GM13976 (cell line): ENCODE measurements at regions of chr12 and their contacts with region 1.

Region 1: GRCh38 chr12:27733052-27733656 is 22.5 kb downstream of the MRPS35 start:
- DNase-seq: peak; percentile 41
- CTCF ChIP-seq: peak; percentile 68

Region 2: DNA sequence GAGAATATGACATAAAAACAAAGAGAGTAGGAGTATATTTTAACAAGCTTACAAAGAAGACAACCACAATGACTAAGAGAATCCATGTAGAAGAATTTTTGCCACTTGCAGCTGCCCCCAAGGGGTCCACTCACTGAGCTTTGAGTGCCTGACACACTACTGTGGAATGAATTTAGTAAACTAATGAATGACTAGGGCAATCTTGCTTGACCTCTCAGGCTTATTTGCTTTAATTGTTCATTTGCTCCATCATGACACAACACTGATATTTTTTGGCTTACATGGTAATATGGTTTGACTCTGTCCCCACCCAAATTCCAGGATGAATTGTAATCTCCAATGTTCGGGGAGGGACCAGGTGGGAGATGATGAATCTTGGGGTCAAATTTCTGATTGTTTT is 1166.8 kb after region 1 on chr12:
- in situ Hi-C with region 1: loop called (anchors 25 kb)
- DNase-seq: no peak
- CTCF ChIP-seq: no peak